Panc1 (cell line): ENCODE measurements at regions of chr9 and their contacts with region 1.

Region 1: GRCh38 chr9:18268381-18268780 is 205.6 kb upstream of the ADAMTSL1 start:
- DNase-seq: no peak
- ATAC-seq: no peak
- H3K4me3 ChIP-seq: no peak overlapping the region
- H3K27ac ChIP-seq: no peak overlapping the region
- H3K4me1 ChIP-seq: no peaks in the 10 kb centered on the region
- H3K27me3 ChIP-seq: no peaks in the 10 kb centered on the region
- CTCF ChIP-seq: no peak

Region 2: DNA sequence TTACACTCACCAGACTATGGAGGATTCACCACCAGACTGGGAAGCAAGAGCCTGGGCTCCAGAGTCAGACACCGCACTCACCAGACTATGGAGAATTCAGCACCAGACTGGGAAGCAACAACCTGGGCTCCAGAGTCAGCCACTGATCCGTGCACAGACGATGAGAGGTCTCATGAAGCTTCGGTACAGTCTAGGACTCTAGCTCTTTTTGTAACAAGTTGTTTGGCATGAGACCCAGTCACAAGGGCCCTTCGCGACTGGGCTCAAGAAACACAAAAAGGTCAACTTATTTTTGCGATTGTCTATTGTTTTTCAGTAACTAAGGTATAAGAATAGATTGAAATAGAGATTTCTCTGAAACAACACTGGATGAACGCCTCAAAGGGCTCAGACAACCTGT is 12.9 kb after region 1 on chr9:
- CTCF ChIA-PET with region 1: no interaction called
- POLR2A ChIA-PET with region 1: no interaction called
- in situ Hi-C with region 1: no loop called
- intact Hi-C with region 1: no loop called
- DNase-seq: no peak
- ATAC-seq: no peak
- H3K4me3 ChIP-seq: no peak overlapping the region
- H3K27ac ChIP-seq: no peak overlapping the region
- H3K4me1 ChIP-seq: no peaks in the 10 kb centered on the region
- H3K27me3 ChIP-seq: no peaks in the 10 kb centered on the region
- CTCF ChIP-seq: no peak

Region 3: GRCh38 chr9:18442629-18443491 is 174.5 kb after region 1 on chr9:
- CTCF ChIA-PET with region 1: no interaction called
- POLR2A ChIA-PET with region 1: no interaction called
- in situ Hi-C with region 1: no loop called
- intact Hi-C with region 1: no loop called
- DNase-seq: no peak
- ATAC-seq: peak; percentile 77
- H3K4me3 ChIP-seq: no peak overlapping the region
- H3K27ac ChIP-seq: no peak overlapping the region
- H3K4me1 ChIP-seq: no peaks in the 10 kb centered on the region
- H3K27me3 ChIP-seq: no peaks in the 10 kb centered on the region
- CTCF ChIP-seq: peak; percentile 76

Region 4: GRCh38 chr9:19028835-19029451 is 760.6 kb after region 1 on chr9:
- CTCF ChIA-PET with region 1: no interaction called
- POLR2A ChIA-PET with region 1: no interaction called
- in situ Hi-C with region 1: no loop called
- intact Hi-C with region 1: loop called (anchors 10 kb)
- DNase-seq: no peak
- ATAC-seq: no peak
- H3K4me3 ChIP-seq: no peak overlapping the region
- H3K27ac ChIP-seq: no peak overlapping the region
- H3K4me1 ChIP-seq: no peaks in the 10 kb centered on the region
- H3K27me3 ChIP-seq: no peaks in the 10 kb centered on the region
- CTCF ChIP-seq: peak; percentile 57